Adrenal gland (tissue), 19 donors: ENCODE measurements at regions of chr15 and their contacts with region 1.

Region 1: DNA sequence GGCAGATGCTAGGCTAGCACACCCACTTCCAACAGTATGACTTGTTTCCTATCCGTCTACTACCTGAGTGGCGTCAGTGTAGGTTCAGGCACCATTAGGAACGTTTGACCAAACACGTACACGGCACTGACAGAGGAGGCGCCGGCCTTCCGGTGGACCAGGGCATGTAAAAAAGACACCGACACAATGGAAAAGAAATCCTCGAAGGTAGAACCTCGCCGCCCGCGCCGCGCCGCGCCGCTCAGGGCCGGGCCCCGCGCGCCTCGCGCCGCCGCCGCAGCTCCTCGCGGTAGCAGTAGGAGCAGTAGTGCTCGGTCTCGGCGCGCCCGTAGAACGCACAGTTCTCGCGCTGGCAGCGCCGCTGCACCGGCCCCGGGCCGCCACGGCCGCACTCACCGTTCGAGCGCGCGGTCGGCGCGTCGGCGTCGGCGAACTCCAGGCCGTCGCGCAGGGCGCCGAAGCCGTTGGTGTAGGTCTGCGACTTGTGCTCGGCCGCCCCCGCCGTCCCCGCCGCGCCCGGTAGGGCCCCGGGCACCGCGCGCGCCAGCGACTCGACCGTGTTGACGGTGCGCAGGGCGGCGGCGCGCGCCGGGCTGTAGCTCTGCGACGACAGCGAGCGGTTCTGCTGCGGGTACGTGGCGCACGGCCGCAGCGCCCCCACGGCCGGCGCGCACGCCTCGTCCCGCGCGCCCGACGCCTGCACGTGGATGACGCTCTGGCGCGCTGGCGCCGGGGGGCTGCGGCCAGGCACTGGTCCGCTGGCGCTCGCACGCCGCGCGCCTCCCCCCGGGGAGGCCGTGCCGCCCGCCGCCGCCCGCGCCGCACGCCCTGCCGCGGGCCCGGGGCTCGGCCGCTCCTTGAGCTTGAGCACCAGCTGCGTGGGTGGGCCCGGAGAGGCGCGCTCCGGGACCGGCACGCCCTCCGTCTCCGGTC is 156.7 kb downstream of the KLF13 start:
- DNase-seq: peak in 2 of 7 donors; percentile 17 to 49
- H3K4me3 ChIP-seq: peak overlapping the region in 1 of 4 donors; percentile 36
- H3K27ac ChIP-seq: no peak overlapping the region
- H3K4me1 ChIP-seq: peaks cover 0 to 1% of the 10 kb centered on the region in 2 donors
- H3K27me3 ChIP-seq: peaks cover 18% of the 10 kb centered on the region
- CTCF ChIP-seq: no peak
- POLR2A ChIP-seq: no peak

Region 2: DNA sequence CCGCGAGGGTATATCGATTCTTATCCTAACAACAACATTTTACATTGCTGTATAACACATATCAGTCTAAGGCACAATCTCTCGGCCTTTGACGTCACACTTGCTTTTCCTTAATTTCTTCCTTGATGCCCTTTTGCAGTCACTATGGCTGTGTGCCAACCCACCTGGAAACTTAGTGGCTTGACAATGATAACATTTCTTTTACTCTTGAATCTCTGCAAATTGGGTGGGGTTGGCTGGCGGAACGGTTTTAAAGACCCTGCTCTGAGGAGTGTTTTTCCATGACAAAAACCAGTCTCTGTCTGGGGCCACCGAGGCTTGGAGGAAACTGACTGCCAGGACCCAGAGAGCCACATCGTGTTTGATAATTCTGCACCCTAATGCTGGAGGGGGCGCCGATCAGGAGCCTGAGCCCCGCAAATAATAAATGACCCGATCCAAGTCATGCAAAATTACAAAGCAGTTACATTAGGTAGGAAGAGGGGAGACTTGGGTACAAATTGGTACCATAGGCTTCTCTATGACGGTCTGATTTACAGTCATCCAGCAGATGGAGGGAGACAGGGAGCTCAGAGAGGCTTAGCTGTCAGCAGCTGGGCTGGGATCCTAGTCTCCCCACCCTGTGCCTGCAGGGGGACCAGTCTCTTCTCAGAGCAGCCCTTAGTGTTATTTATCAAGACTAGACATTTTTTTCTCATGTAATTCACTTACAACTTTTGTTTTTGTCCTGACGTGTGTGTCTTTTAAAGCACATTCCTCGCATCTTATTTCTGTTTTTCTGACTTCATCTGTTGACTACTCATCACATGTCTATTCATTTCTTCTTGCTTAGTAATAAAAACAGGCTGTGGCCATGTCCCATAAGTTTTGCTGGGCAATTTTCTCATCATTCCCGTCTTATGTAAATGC is 40.9 kb before region 1 on chr15:
- intact Hi-C with region 1: loop called in 1 of 2 experiments (anchors 5 kb)
- DNase-seq: no peak
- H3K4me3 ChIP-seq: no peak overlapping the region
- H3K27ac ChIP-seq: peak overlapping the region in 1 of 5 donors; percentile 11
- H3K4me1 ChIP-seq: peaks cover 0 to 12% of the 10 kb centered on the region in 2 donors
- H3K27me3 ChIP-seq: no peaks in the 10 kb centered on the region
- CTCF ChIP-seq: no peak
- POLR2A ChIP-seq: no peak

Region 3: GRCh38 chr15:31887246-31887645 is 403.9 kb after region 1 on chr15:
- intact Hi-C with region 1: no loop called
- DNase-seq: no peak
- H3K4me3 ChIP-seq: no peak overlapping the region
- H3K27ac ChIP-seq: no peak overlapping the region
- H3K4me1 ChIP-seq: no peaks in the 10 kb centered on the region
- H3K27me3 ChIP-seq: no peaks in the 10 kb centered on the region
- CTCF ChIP-seq: no peak
- POLR2A ChIP-seq: no peak